H1 (cell line): ENCODE measurements at regions of chr19 and their contacts with region 1.

Region 1: DNA sequence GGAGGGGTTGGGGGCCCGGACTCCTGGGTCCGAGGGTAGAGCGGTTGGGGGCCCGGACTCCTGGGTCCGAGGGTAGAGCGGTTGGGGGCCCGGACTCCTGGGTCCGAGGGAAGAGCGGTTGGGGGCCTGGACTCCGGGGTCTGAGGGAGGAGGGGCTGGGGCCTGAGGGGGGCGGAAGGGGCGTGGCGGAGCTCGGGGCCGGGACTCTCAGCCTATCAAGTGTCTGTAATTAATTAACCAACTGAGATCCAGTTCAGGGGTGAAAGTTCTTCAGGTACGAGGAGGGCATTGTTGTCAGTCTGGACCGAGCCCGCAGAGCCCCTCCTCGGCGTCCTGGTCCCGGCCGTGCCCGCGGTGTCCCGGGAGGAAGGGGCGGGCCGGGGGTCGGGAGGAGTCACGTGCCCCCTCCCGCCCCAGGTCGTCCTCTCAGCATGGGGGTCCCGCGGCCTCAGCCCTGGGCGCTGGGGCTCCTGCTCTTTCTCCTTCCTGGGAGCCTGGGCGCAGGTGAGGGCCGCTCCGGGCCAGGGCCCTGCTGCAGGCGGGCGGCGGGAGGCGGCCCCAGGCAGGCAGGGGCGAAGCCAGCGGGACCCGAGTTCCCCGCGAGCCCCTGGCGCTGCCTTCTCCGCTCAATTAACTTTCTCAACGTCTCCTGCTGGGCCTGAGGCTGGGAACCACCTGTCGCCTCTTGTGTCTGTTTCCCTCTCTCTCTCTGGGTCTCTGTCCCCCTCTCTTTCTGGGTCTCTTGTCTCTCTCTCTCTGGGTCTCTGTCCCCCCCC is 697 bp downstream of the FCGRT start:
- DNase-seq: peak in 1 of 2 experiments; percentile 81
- H3K4me3 ChIP-seq: peak overlapping the region; percentile 66 to 93 (median 75)
- H3K27ac ChIP-seq: peak overlapping the region; percentile 55; the same call in 1 of the 2 replicates
- H3K4me1 ChIP-seq: peaks cover 0 to 9% (median 8%) of the 10 kb centered on the region in 4 experiments; a peak in 5 of 7 replicates
- H3K27me3 ChIP-seq: no peaks in the 10 kb centered on the region; a peak in 1 of 7 replicates
- CTCF ChIP-seq: no peak
- EP300 ChIP-seq: no peak
- POLR2A ChIP-seq: peak in 1 of 2 experiments; percentile 75; a peak in 2 of 3 replicates
- RAD21 ChIP-seq: no peak

Region 2: DNA sequence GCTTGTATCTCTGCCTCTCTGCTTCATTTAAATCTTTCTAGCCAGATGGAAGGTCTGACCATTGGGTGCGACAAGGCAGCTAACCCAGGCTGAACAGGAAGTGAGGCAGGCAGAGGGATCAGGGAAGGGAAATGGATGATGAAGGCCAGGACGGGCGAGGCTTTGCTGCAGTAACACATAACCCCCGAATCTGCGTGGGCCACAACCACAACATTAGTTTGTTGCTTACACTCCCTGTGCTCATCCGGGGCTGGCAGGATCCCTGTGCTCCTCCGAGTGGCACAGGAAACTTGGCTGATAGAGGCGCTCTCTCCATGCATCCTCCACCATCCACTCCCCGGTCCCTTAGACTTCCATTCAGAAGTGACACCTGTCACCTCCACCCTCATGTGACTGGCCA is 40.2 kb before region 1 on chr19:
- CTCF ChIA-PET with region 1: no interaction called
- POLR2A ChIA-PET with region 1: no interaction called
- DNase-seq: no peak
- H3K4me3 ChIP-seq: no peak overlapping the region
- H3K27ac ChIP-seq: no peak overlapping the region
- H3K4me1 ChIP-seq: peaks cover 0 to 12% (median 3%) of the 10 kb centered on the region in 4 experiments; a peak in 6 of 7 replicates
- H3K27me3 ChIP-seq: peaks cover 0 to 5% (median 0%) of the 10 kb centered on the region in 4 experiments; a peak in 4 of 7 replicates
- CTCF ChIP-seq: no peak
- EP300 ChIP-seq: no peak
- POLR2A ChIP-seq: no peak
- RAD21 ChIP-seq: no peak

Region 3: GRCh38 chr19:49528211-49528771 is 15.1 kb after region 1 on chr19:
- CTCF ChIA-PET with region 1: interaction called, 13 read pairs
- POLR2A ChIA-PET with region 1: interaction called, 20 read pairs
- DNase-seq: peak in 1 of 2 experiments; percentile 57
- H3K4me3 ChIP-seq: peak overlapping the region; percentile 36 to 65 (median 49)
- H3K27ac ChIP-seq: no peak overlapping the region
- H3K4me1 ChIP-seq: peaks cover 0 to 9% (median 3%) of the 10 kb centered on the region in 4 experiments; a peak in 5 of 7 replicates
- H3K27me3 ChIP-seq: no peaks in the 10 kb centered on the region
- CTCF ChIP-seq: no peak
- EP300 ChIP-seq: no peak
- POLR2A ChIP-seq: no peak; a peak in 1 of 3 replicates
- RAD21 ChIP-seq: no peak

Region 4: GRCh38 chr19:49533551-49534488 is 20.7 kb after region 1 on chr19:
- CTCF ChIA-PET with region 1: interaction called, 13 read pairs
- POLR2A ChIA-PET with region 1: interaction called, 11 read pairs
- DNase-seq: peak in 1 of 2 experiments; percentile 96
- H3K4me3 ChIP-seq: peak overlapping the region; percentile 60 to 81 (median 72)
- H3K27ac ChIP-seq: no peak overlapping the region
- H3K4me1 ChIP-seq: peaks cover 0 to 9% (median 1%) of the 10 kb centered on the region in 4 experiments; a peak in 5 of 7 replicates
- H3K27me3 ChIP-seq: no peaks in the 10 kb centered on the region; a peak in 1 of 7 replicates
- CTCF ChIP-seq: peak; percentile 22 to 76 (median 53)
- EP300 ChIP-seq: no peak
- POLR2A ChIP-seq: no peak
- RAD21 ChIP-seq: no peak